Activated T-helper 1 cell treated with anti-CD3 and anti-CD28 coated beads, Interleukin-12 subunit alpha, Interleukin-12 subunit beta, Interleukin-2, Interleukin-4 antibody, amounts not matched to agents 30 ng/mL and 10 ng/mL and 1 ng/mL, durations not matched to agents 14 hours and 24 hours and 36 hours (primary cell): ENCODE measurements at regions of chr4 and their contacts with region 1.

Region 1: DNA sequence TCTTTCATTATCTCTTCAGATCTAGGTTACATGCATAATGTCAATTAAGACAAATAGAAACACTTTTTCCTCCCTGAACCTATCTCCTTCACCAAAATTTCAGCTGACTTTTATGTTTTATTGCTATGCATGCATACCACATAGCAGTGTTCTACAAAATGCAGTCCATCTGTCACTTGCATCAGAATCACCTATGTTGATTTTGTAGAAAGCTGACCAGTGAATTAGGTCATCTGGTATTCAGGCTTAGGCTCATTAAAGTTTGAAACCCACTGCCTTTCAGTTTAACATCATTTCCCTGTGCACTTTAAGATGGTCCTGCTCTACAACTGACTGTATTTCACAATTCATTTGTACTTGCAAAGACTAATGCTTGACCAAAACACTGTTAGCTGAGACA is 277.9 kb downstream of the CFAP299 start:
- DNase-seq: no peak
- H3K4me3 Mint-ChIP-seq: no peak overlapping the region
- H3K27ac Mint-ChIP-seq: no peak overlapping the region
- H3K4me1 Mint-ChIP-seq: no peaks in the 10 kb centered on the region
- H3K27me3 Mint-ChIP-seq: peaks cover 2% of the 10 kb centered on the region

Region 2: GRCh38 chr4:80592950-80593349 is 20.5 kb before region 1 on chr4:
- intact Hi-C with region 1: loop called (anchors 1 kb)
- DNase-seq: no peak
- H3K4me3 Mint-ChIP-seq: no peak overlapping the region
- H3K27ac Mint-ChIP-seq: no peak overlapping the region
- H3K4me1 Mint-ChIP-seq: no peaks in the 10 kb centered on the region
- H3K27me3 Mint-ChIP-seq: peaks cover 2% of the 10 kb centered on the region